ENCODE measurements at regions of chr11 and their contacts with region 1.

Region 1: DNA sequence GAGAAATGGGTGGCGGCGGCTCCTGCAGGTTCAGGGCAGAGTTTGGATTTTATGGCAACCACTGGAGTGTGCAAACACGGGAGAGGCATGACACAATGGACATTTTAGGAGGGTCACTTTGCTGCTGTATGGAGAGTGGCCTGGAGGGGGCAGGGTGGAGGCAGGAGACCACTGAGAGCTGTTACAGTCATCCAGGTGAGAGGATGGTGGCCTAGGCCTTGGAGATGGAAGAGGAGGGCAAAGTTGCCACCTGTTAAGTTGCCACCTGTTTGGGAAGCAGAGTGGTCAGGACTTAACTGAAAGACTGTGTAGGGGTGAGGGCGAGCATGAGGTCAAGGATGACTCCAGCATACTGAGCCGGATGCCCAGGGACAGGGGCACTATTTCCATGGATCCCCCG is 2.3 kb upstream of the RAD9A start:
- DNase-seq: no peak
- ATAC-seq: peak; percentile 34
- H3K4me3 ChIP-seq: no peak overlapping the region
- H3K27ac ChIP-seq: no peak overlapping the region
- H3K4me1 ChIP-seq: peaks cover 18% of the 10 kb centered on the region
- H3K27me3 ChIP-seq: no peaks in the 10 kb centered on the region
- CTCF ChIP-seq: peak; percentile 47

Region 2: DNA sequence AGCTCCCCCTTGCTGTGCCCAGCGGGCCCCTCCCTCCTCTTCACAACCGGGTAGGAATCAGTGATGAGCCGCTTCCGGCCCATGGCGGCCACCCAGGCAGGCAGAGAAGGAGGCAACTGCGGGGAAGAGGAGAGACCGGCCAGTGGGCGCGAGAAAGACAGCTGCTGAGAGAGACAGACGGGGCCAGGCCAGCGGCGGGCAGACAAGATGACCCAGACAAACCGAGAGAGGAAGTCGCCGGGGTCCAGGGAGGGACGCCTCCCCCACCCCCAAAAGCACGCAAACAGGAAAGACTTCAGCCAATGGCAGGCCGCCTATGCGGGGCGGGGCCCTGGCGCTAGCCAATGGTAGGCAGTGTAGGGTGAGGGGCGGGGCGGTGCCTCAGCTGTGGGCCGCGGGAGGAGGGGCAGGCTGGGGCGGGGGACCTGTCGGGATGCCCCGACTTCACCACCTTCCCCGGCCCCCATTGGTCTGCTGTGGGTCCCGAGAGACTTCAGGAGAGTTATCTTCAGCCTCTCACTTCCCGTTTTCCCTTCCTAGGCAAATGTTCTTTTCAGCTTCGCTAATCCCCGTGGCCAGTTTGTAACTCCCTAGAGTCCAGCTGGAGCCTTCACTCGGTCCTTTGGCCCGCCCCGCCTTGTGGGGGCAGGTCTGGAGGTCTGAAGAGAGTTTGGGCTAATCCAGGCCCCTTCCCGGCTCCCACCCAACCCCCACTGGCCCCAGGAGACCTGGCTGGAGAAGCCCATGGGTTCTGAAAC is 36.0 kb before region 1 on chr11 and contains the start of gene POLD4:
- intact Hi-C with region 1: loop called (anchors 5 kb)
- DNase-seq: peak; percentile 100
- ATAC-seq: peak; percentile 91
- H3K4me3 ChIP-seq: peak within 1 kb of the TSS; percentile 84
- H3K27ac ChIP-seq: peak within 1 kb of the TSS; percentile 99
- H3K4me1 ChIP-seq: peaks cover 62% of the 10 kb centered on the region
- H3K27me3 ChIP-seq: no peaks in the 10 kb centered on the region
- CTCF ChIP-seq: no peak
- total RNA-seq, gene POLD4: 69.3 TPM

Measured in upper lobe of right lung (tissue), 1 donor.